Endothelial cell of umbilical vein (primary cell): ENCODE measurements at regions of chr1 and their contacts with region 1.

Region 1: DNA sequence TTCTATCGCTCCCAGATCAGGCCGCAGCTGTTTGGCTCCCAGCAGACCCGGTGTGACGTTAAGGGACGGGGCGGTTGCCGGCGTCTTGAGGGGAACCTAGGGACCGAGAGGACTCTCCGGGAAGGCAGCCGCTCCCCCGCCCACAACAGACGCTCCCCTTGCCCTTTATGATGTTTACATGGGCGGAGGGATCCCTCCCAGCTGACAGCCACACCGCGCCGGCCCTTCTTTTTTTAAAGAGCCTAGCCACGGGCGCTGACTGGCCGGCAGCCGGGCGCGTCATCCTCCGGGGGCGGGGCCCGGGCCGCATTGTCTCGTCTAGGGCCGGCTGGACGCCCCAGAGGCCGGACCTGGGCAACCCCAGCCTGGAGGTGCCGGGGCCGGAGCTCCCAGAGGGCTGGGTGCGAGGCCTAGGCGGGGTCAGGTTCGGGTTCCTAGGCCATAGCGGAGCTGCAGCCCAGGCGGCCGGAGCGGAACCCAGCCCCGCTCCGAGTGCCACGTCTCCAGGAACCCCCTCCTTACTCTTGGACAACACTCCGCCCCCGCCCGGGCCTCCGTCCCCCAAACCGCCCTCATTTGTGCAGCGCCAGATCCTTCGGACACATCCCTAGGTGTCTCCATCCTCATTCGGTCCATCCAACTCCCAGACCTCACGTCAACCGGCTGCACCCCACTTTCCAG is at the start of gene PCAT6:
- DNase-seq: peak; percentile 92
- H3K4me3 ChIP-seq: peak within 1 kb of the TSS; percentile 58 to 81 (median 60)
- H3K27ac ChIP-seq: peak within 1 kb of the TSS; percentile 46
- H3K4me1 ChIP-seq: peaks cover 13% of the 10 kb centered on the region
- H3K27me3 ChIP-seq: peaks cover 9 to 10% of the 10 kb centered on the region in 2 experiments
- CTCF ChIP-seq: no peak
- POLR2A ChIP-seq: peak; percentile 90
- total RNA-seq, gene PCAT6: 1.5 and 1.7 TPM in 2 replicates

Region 2: GRCh38 chr1:202861420-202862200 is 50.9 kb after region 1 on chr1:
- CTCF ChIA-PET with region 1: no interaction called
- POLR2A ChIA-PET with region 1: interaction called, 3 read pairs
- dilution Hi-C with region 1: no loop called
- intact Hi-C with region 1: loop called (anchors 1 kb)
- DNase-seq: peak; percentile 93
- H3K4me3 ChIP-seq: peak overlapping the region; percentile 63 to 88 (median 70)
- H3K27ac ChIP-seq: no peak overlapping the region
- H3K4me1 ChIP-seq: peaks cover 10% of the 10 kb centered on the region
- H3K27me3 ChIP-seq: peaks cover 3 to 5% of the 10 kb centered on the region in 2 experiments
- CTCF ChIP-seq: no peak
- POLR2A ChIP-seq: no peak